ENCODE measurements at regions of chr1 and their contacts with region 1.

Region 1: DNA sequence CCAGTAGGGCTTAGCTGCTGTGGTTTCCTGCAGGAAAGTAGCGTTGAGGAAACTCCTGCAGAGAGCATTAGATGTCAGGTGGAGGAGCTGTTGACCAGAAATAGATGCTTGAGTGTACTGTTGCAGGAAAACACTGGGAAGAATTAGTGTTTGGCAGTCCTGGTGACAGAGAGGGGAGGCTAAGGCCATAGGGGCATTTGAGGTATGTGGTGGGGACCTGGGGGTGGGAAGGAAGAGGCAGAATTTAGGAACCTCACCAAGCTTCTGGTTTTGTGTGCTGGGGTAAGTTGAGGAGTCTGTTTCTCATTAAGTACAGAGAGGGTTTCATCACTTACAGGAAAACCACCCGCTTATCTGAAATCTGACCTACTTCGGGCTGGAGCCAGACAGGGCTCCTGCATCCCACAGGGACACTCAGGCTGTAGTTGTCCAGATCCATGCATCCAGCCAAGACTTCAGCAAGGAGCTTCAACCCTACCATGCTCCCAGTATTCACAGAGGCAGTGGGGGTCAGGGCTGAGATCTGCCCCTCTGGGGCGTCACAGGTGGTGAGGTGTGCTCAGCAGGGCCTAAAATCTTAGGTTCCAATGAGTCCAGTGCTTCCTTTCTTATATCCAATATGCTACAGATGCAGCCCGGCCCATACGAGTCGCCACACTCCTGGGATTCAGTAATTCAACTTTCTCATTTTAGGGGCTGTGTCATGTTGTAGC is 15.1 kb downstream of the SH2D2A start:
- DNase-seq: no peak
- H3K4me3 ChIP-seq: no peak overlapping the region
- H3K27ac ChIP-seq: peak overlapping the region in 2 of 8 donors; percentile 4 to 8
- H3K4me1 ChIP-seq: peaks cover 0 to 43% (median 11%) of the 10 kb centered on the region in 6 donors
- H3K27me3 ChIP-seq: no peaks in the 10 kb centered on the region
- CTCF ChIP-seq: no peak
- POLR2A ChIP-seq: no peak

Region 2: GRCh38 chr1:156859523-156860112 is 58.1 kb after region 1 on chr1:
- intact Hi-C with region 1: loop called (anchors 10 kb)
- DNase-seq: no peak
- H3K4me3 ChIP-seq: peak overlapping the region in 7 of 8 donors; percentile 23 to 70 (median 34)
- H3K27ac ChIP-seq: no peak overlapping the region
- H3K4me1 ChIP-seq: peaks cover 20 to 36% (median 27%) of the 10 kb centered on the region in 6 donors
- H3K27me3 ChIP-seq: peaks cover 7 to 80% (median 48%) of the 10 kb centered on the region in 7 donors
- CTCF ChIP-seq: no peak
- POLR2A ChIP-seq: no peak

Region 3: GRCh38 chr1:156896490-156897033 is 95.0 kb after region 1 on chr1:
- intact Hi-C with region 1: no loop called
- DNase-seq: no peak
- H3K4me3 ChIP-seq: no peak overlapping the region
- H3K27ac ChIP-seq: peak overlapping the region in 5 of 8 donors; percentile 15 to 90 (median 82)
- H3K4me1 ChIP-seq: peaks cover 13 to 100% (median 68%) of the 10 kb centered on the region in 6 donors
- H3K27me3 ChIP-seq: peaks cover 0 to 73% (median 14%) of the 10 kb centered on the region in 7 donors
- CTCF ChIP-seq: no peak
- POLR2A ChIP-seq: no peak

Region 4: GRCh38 chr1:157193702-157194391 is 392.3 kb after region 1 on chr1:
- intact Hi-C with region 1: no loop called
- DNase-seq: peak; percentile 81
- H3K4me3 ChIP-seq: no peak overlapping the region
- H3K27ac ChIP-seq: no peak overlapping the region
- H3K4me1 ChIP-seq: peaks cover 0 to 13% (median 5%) of the 10 kb centered on the region in 6 donors
- H3K27me3 ChIP-seq: peaks cover 6 to 61% (median 29%) of the 10 kb centered on the region in 7 donors
- CTCF ChIP-seq: peak in 9 of 11 experiments; percentile 17 to 62 (median 38)
- POLR2A ChIP-seq: no peak

Measured in spleen (tissue), 13 donors.